ENCODE measurements at regions of chr3 and their contacts with region 1.

Region 1: DNA sequence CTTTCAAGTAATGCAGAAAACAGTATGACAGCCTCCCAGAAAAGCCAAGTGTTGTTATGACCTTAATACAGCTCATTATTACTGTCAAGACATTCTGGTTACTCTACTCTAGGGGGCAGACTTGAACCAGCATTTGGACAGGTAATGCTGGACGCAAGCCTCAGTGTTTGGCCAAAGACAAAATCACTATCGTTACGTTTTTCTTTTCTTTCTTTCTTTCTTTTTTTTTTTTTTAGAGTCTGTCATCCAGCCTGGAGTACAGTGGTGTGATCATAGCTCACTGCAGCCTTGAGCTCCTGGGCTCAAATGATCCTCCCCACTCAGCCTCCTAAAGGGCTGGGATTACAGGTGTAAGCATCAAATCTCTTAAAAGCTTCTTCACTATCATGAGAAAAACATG is 29.4 kb upstream of the TMEM45A start:
- DNase-seq: peak; percentile 35
- ATAC-seq: peak; percentile 95
- H3K4me3 ChIP-seq: no peak overlapping the region
- H3K27ac ChIP-seq: no peak overlapping the region
- H3K4me1 ChIP-seq: peaks cover 10% of the 10 kb centered on the region
- H3K27me3 ChIP-seq: no peaks in the 10 kb centered on the region
- CTCF ChIP-seq: peak; percentile 65 to 78 (median 71); a peak in 5 of 6 replicates
- EP300 ChIP-seq: no peak
- POLR2A ChIP-seq: no peak
- RAD21 ChIP-seq: peak; percentile 99

Region 2: GRCh38 chr3:100136921-100137320 is 326.1 kb before region 1 on chr3:
- CTCF ChIA-PET with region 1: no interaction called
- POLR2A ChIA-PET with region 1: no interaction called
- RAD21 ChIA-PET with region 1: no interaction called
- SMC1A ChIA-PET with region 1: no interaction called
- in situ Hi-C with region 1: no loop called
- intact Hi-C with region 1: no loop called
- DNase-seq: no peak
- ATAC-seq: no peak
- H3K4me3 ChIP-seq: no peak overlapping the region
- H3K27ac ChIP-seq: no peak overlapping the region
- H3K4me1 ChIP-seq: no peaks in the 10 kb centered on the region
- H3K27me3 ChIP-seq: no peaks in the 10 kb centered on the region
- CTCF ChIP-seq: no peak
- EP300 ChIP-seq: no peak
- POLR2A ChIP-seq: no peak
- RAD21 ChIP-seq: no peak

Region 3: GRCh38 chr3:100184948-100185570 is 277.9 kb before region 1 on chr3:
- CTCF ChIA-PET with region 1: no interaction called
- POLR2A ChIA-PET with region 1: no interaction called
- RAD21 ChIA-PET with region 1: no interaction called
- SMC1A ChIA-PET with region 1: no interaction called
- in situ Hi-C with region 1: no loop called
- intact Hi-C with region 1: no loop called
- DNase-seq: no peak
- ATAC-seq: no peak
- H3K4me3 ChIP-seq: no peak overlapping the region
- H3K27ac ChIP-seq: no peak overlapping the region
- H3K4me1 ChIP-seq: no peaks in the 10 kb centered on the region
- H3K27me3 ChIP-seq: no peaks in the 10 kb centered on the region
- CTCF ChIP-seq: no peak
- EP300 ChIP-seq: no peak
- POLR2A ChIP-seq: no peak
- RAD21 ChIP-seq: no peak

Region 4: GRCh38 chr3:100334488-100335351 is 128.3 kb before region 1 on chr3 and contains the start of gene NIT2:
- CTCF ChIA-PET with region 1: interaction called, 10 read pairs
- POLR2A ChIA-PET with region 1: no interaction called
- RAD21 ChIA-PET with region 1: interaction called, 5 read pairs
- SMC1A ChIA-PET with region 1: interaction called, 9 read pairs
- in situ Hi-C with region 1: no loop called
- intact Hi-C with region 1: no loop called
- DNase-seq: no peak
- ATAC-seq: peak; percentile 96
- H3K4me3 ChIP-seq: peak within 1 kb of the TSS; percentile 91
- H3K27ac ChIP-seq: peak within 1 kb of the TSS; percentile 80
- H3K4me1 ChIP-seq: peaks cover 8% of the 10 kb centered on the region
- H3K27me3 ChIP-seq: no peaks in the 10 kb centered on the region
- CTCF ChIP-seq: no peak; a peak in 1 of 6 replicates
- EP300 ChIP-seq: no peak
- POLR2A ChIP-seq: peak; percentile 96
- RAD21 ChIP-seq: no peak
- polyA plus RNA-seq, gene NIT2: 188 to 215 TPM

Region 5: DNA sequence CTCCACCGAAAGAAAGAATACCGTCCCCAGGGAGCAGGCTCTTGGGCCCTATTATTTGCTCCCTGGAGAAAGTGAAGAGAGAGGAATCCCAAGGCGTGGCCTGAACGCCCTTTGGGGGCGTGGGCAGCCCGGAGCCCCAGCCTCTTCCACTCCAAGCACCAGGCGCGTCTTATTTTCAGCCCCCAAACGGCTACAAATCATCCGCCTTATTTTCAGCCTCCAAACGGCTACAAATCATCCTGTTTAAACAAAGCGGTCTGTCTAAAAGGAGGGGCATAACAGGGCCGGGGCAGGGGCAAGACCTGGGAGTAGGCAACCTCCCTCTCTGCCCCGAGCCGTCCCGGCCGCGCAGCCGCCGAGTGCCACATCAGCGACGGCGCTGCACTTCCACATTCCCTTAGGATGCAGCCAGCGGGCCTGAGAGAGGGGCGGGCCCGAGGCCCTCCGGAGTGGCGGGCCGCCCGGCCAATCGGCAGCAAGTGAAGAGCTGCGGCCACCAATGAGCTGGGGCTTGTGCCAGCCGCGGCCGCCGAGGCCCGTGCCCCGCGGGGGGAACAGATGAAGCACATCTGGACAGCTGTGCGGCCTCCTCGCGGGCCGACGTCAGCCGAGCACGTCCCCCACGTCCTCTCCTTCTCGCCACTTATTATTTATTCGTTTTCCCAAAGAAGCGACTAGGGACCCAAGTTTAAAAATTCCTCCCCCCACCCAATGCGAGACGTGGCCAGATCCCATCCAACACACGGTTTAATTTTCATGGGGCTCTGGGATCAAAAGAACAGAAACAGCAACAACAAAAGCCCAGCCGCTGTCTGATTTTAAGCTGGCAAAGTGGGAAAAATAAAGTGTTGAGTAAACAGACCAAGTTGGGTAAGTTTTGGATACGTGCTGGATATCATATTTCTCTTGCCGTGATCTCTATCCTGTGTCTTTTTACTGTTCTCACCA is 29.3 kb after region 1 on chr3 and contains the start of gene TMEM45A:
- CTCF ChIA-PET with region 1: interaction called, 4 read pairs
- POLR2A ChIA-PET with region 1: interaction called, 3 read pairs
- RAD21 ChIA-PET with region 1: interaction called, 23 read pairs
- SMC1A ChIA-PET with region 1: interaction called, 16 read pairs
- in situ Hi-C with region 1: no loop called
- intact Hi-C with region 1: no loop called
- DNase-seq: peak; percentile 72
- ATAC-seq: peak; percentile 99
- H3K4me3 ChIP-seq: peak within 1 kb of the TSS; percentile 85
- H3K27ac ChIP-seq: peak within 1 kb of the TSS; percentile 62
- H3K4me1 ChIP-seq: peaks cover 21% of the 10 kb centered on the region
- H3K27me3 ChIP-seq: no peaks in the 10 kb centered on the region
- CTCF ChIP-seq: no peak
- EP300 ChIP-seq: no peak
- POLR2A ChIP-seq: peak; percentile 63
- RAD21 ChIP-seq: no peak
- polyA plus RNA-seq, gene TMEM45A: 2.5 to 3.0 TPM

Region 6: DNA sequence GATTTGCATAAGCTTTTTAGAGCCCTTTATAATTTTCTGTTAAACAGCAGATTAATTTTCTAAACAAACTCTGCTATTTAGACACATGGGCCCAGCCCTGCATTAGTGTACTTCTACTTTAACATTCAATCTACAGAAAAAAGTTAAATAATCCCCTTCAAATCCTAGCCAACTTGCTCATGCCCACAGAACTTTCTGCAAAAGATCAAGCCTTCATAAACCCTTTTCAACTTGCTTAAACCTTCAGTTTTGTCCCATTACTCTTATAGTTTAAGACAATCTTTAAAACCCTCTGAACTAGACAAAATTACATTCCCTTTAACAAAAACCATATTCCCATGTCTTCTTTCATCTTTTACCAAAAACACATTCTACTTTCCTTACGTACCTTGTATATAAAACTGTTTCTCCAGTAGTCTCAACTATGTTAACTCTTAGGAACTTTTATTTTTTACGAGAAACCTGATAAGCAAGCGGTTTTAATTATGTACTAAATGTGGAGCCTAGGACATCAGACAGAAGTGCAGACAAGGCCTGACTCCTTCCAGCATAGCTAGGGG is 121.2 kb after region 1 on chr3:
- CTCF ChIA-PET with region 1: interaction called, 462 read pairs
- POLR2A ChIA-PET with region 1: no interaction called
- RAD21 ChIA-PET with region 1: interaction called, 231 read pairs
- SMC1A ChIA-PET with region 1: interaction called, 279 read pairs
- in situ Hi-C with region 1: no loop called
- intact Hi-C with region 1: no loop called
- DNase-seq: no peak
- ATAC-seq: no peak
- H3K4me3 ChIP-seq: no peak overlapping the region
- H3K27ac ChIP-seq: no peak overlapping the region
- H3K4me1 ChIP-seq: no peaks in the 10 kb centered on the region
- H3K27me3 ChIP-seq: no peaks in the 10 kb centered on the region
- CTCF ChIP-seq: no peak
- EP300 ChIP-seq: no peak
- POLR2A ChIP-seq: no peak
- RAD21 ChIP-seq: no peak

Region 7: GRCh38 chr3:100634493-100635272 is 171.7 kb after region 1 on chr3:
- CTCF ChIA-PET with region 1: interaction called, 102 read pairs
- POLR2A ChIA-PET with region 1: interaction called, 7 read pairs
- RAD21 ChIA-PET with region 1: interaction called, 134 read pairs
- SMC1A ChIA-PET with region 1: interaction called, 145 read pairs
- in situ Hi-C with region 1: no loop called
- intact Hi-C with region 1: loop called (anchors 1 kb)
- DNase-seq: peak; percentile 31
- ATAC-seq: peak; percentile 92
- H3K4me3 ChIP-seq: no peak overlapping the region
- H3K27ac ChIP-seq: no peak overlapping the region
- H3K4me1 ChIP-seq: no peaks in the 10 kb centered on the region
- H3K27me3 ChIP-seq: no peaks in the 10 kb centered on the region
- CTCF ChIP-seq: peak; percentile 12 to 56 (median 17); a peak in 2 of 6 replicates
- EP300 ChIP-seq: no peak
- POLR2A ChIP-seq: no peak
- RAD21 ChIP-seq: peak; percentile 31; the same call in 1 of the 2 replicates

Region 8: DNA sequence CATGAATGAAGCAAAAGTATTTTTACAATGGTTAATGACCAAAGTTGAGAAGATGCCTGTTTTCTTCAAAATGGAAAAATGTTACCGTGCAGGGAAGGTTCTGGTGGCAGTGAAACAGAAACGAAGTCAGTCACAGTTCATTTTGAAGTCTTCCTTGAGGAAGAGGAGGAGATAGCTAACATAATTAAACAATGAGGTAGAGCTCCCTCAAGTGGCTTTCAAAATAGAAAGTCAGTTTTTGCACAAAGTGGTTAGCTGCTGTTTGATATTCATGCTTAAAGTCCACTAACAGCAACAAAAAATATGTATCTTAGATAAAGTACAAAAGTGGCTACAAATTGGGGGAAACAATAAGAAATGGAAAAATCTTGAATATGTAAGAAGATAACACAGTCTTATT is 333.6 kb after region 1 on chr3:
- CTCF ChIA-PET with region 1: interaction called, 51 read pairs
- POLR2A ChIA-PET with region 1: no interaction called
- RAD21 ChIA-PET with region 1: interaction called, 60 read pairs
- SMC1A ChIA-PET with region 1: interaction called, 41 read pairs
- in situ Hi-C with region 1: no loop called
- intact Hi-C with region 1: loop called (anchors 2 kb)
- DNase-seq: peak; percentile 12
- ATAC-seq: peak; percentile 76
- H3K4me3 ChIP-seq: no peak overlapping the region
- H3K27ac ChIP-seq: no peak overlapping the region
- H3K4me1 ChIP-seq: no peaks in the 10 kb centered on the region
- H3K27me3 ChIP-seq: no peaks in the 10 kb centered on the region
- CTCF ChIP-seq: peak; percentile 30 to 52 (median 35); a peak in 4 of 6 replicates
- EP300 ChIP-seq: no peak
- POLR2A ChIP-seq: no peak
- RAD21 ChIP-seq: peak; percentile 45; the same call in 1 of the 2 replicates

Measured in GM12878 (cell line).